T-cell (primary cell): ENCODE measurements at regions of chr13 and their contacts with region 1.

Region 1: GRCh38 chr13:51519771-51520216 is 64.5 kb upstream of the WDFY2 start:
- DNase-seq: no peak
- ATAC-seq: no peak
- H3K4me3 ChIP-seq: no peak overlapping the region
- H3K4me3 Mint-ChIP-seq: no peak overlapping the region
- H3K27ac ChIP-seq: no peak overlapping the region
- H3K27ac Mint-ChIP-seq: no peak overlapping the region
- H3K4me1 ChIP-seq: peaks cover 10 to 12% of the 10 kb centered on the region in 2 experiments
- H3K4me1 Mint-ChIP-seq: peaks cover 0 to 17% (median 14%) of the 10 kb centered on the region in 3 donors
- H3K27me3 ChIP-seq: no peaks in the 10 kb centered on the region
- H3K27me3 Mint-ChIP-seq: no peaks in the 10 kb centered on the region

Region 2: DNA sequence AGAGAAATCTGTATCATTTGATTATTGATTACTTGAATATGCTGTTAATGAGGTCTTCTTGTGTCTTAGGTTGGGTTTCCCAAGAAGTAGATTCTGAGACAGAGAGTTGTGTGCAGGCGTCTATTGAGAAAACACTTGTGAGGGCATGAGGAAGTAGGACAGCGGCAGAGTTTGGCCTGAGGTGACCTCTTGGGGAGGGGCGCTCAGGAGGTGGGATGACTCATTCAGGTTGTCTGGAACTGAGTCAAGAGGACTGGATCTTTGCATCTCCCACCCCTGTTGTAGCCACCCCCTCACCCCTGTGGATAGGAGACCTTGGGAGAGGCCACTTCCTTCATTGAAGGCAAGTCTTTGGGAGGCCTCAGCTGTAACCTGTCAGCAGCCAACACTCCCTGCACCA is 29.3 kb after region 1 on chr13:
- CTCF ChIA-PET with region 1: no interaction called
- POLR2A ChIA-PET with region 1: interaction called, 3 to 14 read pairs
- DNase-seq: peak in 2 of 35 experiments; percentile 0 to 17
- ATAC-seq: no peak
- H3K4me3 ChIP-seq: no peak overlapping the region
- H3K4me3 Mint-ChIP-seq: no peak overlapping the region
- H3K27ac ChIP-seq: no peak overlapping the region
- H3K27ac Mint-ChIP-seq: no peak overlapping the region
- H3K4me1 ChIP-seq: no peaks in the 10 kb centered on the region
- H3K4me1 Mint-ChIP-seq: no peaks in the 10 kb centered on the region
- H3K27me3 ChIP-seq: no peaks in the 10 kb centered on the region
- H3K27me3 Mint-ChIP-seq: no peaks in the 10 kb centered on the region